Heart left ventricle (tissue), 16 donors: ENCODE measurements at regions of chr1 and their contacts with region 1.

Region 1: GRCh38 chr1:113904674-113905434 is at the starts of genes AP4B1 and DCLRE1B:
- DNase-seq: peak; percentile 99
- ATAC-seq: peak; percentile 98
- H3K4me3 ChIP-seq: peak within 1 kb of the TSS; percentile 63 to 94 (median 80)
- H3K27ac ChIP-seq: peak within 1 kb of the TSS; percentile 59 to 97 (median 92)
- H3K4me1 ChIP-seq: peaks cover 0 to 43% (median 19%) of the 10 kb centered on the region in 12 donors
- H3K27me3 ChIP-seq: no peaks in the 10 kb centered on the region
- CTCF ChIP-seq: peak; percentile 52 to 90 (median 72)
- POLR2A ChIP-seq: peak in 1 of 2 donors; percentile 73
- total RNA-seq, gene AP4B1: 7.3 to 17.2 (median 10.8) TPM
- total RNA-seq, gene DCLRE1B: 1.2 to 6.0 (median 2.2) TPM

Region 2: DNA sequence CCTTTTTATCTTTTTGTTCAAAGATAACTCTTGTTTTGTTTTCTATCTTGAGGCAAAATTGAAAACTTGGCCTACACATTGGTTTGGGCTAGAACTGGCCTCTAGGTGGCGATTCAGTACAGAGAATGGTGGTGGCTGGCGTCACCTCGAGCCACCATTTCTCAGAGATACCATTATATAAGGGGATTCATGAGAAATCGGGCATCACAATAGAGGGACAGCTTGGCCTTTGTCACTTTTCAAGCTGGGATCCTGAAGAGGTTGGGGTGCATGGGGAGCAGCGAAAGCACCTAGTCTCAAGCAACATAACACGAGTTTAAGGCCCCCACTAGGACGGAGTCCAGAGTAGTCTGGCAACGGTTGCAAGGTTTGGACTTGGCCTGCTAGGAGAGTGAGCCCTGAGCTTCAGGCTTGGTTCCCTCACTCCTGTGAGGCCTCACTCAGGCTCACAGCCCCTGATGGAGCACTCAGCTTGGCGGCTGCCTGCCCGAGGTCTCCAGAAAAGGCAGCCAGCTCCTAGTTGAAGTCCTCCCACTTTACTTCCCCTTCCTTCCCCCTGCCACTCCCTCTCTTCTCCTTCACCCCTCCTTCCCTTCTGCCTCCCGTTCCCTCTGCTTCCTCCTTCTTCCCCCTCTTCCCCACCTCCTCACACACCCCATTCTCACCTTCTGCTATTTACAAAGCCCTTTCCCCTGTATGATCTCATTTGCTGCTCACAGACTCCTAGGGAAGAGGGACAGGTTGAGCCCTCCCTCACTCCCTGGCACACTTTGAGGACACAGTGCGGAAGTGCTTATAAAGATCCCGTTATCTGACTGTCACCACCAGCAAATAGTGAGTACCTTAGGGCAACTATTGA is 764.0 kb before region 1 on chr1:
- intact Hi-C with region 1: loop called in 1 of 10 experiments (anchors 10 kb)
- DNase-seq: peak in 4 of 5 donors; percentile 41 to 65 (median 56)
- ATAC-seq: peak; percentile 76 to 92 (median 90)
- H3K4me3 ChIP-seq: peak overlapping the region in 5 of 12 donors; percentile 11 to 42 (median 20)
- H3K27ac ChIP-seq: peak overlapping the region in 5 of 12 donors; percentile 2 to 61 (median 48)
- H3K4me1 ChIP-seq: peaks cover 0 to 33% (median 25%) of the 10 kb centered on the region in 12 donors
- H3K27me3 ChIP-seq: no peaks in the 10 kb centered on the region
- CTCF ChIP-seq: peak; percentile 65 to 91 (median 82)
- POLR2A ChIP-seq: no peak

Region 3: DNA sequence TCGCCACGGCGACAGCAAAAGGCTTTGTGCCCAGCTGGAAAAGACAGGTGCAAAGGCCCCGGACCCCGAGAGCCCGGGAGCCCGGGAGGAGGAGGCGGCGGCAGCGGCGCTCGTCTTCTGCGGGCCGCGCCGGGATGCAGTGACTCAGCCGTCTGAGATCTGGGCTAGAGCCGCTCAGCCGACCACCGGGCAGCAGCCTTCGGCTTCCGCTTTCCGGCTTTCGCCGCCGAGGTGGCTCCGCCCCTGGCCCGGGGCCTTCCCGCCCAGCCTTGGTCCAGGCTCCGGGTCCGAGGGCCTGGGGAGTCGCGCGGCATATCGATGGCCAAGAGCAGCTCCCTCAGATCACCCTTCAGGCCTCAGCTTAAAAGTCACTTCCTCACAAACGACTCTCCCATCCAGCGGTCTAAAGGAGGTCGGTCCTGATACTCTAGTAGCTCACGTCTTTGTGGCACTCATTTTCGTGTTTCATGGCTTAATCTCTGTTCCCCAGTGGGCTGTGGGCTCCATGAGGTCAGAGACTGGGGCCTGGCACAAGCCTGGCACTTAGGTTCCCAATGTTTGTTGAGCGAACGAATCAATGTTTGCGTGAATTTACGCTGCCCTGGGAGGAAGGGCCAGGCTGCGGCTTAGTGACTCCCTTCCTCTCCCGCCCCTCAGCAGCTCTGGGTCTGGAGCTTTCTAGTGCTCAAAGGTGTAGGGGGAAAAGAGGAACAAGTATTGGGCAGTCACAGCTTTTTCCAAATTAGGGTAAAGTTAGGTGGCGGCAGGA is 145.3 kb before region 1 on chr1 and contains the start of gene PHTF1:
- intact Hi-C with region 1: loop called in 3 of 10 experiments (anchors 2 to 10 kb)
- DNase-seq: peak; percentile 70 to 91 (median 84)
- ATAC-seq: peak; percentile 87 to 94 (median 94)
- H3K4me3 ChIP-seq: peak within 1 kb of the TSS; percentile 50 to 94 (median 86)
- H3K27ac ChIP-seq: peak within 1 kb of the TSS; percentile 86 to 97 (median 95)
- H3K4me1 ChIP-seq: peaks cover 0 to 27% (median 10%) of the 10 kb centered on the region in 12 donors
- H3K27me3 ChIP-seq: no peaks in the 10 kb centered on the region
- CTCF ChIP-seq: no peak
- POLR2A ChIP-seq: peak in 1 of 2 donors; percentile 60
- total RNA-seq, gene PHTF1: 5.5 to 19.7 (median 11.9) TPM

Region 4: DNA sequence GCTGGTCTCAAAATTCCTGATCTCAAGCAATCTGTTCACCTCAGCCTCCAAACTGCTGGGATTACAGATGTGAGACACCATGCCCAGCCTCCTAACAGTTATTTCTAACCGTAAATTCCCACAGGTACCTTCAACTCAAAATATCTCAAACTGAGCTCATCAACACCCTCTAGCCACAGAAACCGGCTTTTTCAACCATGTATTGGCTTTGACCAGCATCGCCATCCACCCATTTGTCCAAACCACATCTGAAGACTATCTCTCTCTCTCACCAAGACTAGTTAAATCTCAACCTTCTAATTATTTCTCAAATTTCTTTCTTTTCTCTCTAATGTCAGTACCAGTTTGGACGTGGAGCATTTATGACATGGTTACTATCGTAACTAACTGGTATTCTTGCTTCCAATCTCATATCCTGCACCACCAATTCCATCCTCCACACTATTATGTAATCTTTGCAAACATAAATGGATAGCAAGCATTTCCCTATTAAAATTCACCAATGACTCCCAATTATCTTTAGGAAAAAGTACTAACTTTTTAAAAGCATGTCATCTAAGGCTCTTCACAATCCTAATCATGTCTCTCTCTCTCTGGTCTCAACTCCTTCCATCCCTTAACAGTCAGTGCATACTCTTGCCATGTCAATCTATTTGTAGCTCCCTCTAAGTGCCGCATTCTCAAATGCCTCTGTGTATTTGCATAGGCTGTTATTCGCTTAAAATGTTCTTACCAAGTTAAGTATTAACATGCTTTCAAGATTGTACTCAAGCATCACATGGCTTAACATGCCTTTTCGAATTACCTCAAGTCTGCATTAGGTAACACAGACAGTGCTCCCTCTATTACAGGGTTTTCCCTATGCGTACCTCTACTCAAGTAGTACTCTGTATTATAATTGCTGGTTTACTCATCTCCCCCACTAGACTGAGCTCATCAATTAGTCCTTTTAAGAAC is 110.7 kb before region 1 on chr1:
- intact Hi-C with region 1: no loop called
- DNase-seq: no peak
- ATAC-seq: peak; percentile 69 to 90 (median 86)
- H3K4me3 ChIP-seq: no peak overlapping the region
- H3K27ac ChIP-seq: peak overlapping the region in 7 of 12 donors; percentile 10 to 63 (median 22)
- H3K4me1 ChIP-seq: peaks cover 0 to 51% (median 22%) of the 10 kb centered on the region in 12 donors
- H3K27me3 ChIP-seq: no peaks in the 10 kb centered on the region
- CTCF ChIP-seq: no peak
- POLR2A ChIP-seq: no peak

Region 5: GRCh38 chr1:113811888-113812660 is 92.8 kb before region 1 on chr1 and contains the start of gene RSBN1:
- intact Hi-C with region 1: loop called in 3 of 10 experiments (anchors 2 to 5 kb)
- DNase-seq: peak; percentile 99
- ATAC-seq: peak; percentile 97 to 99 (median 98)
- H3K4me3 ChIP-seq: peak within 1 kb of the TSS; percentile 73 to 99 (median 88)
- H3K27ac ChIP-seq: peak within 1 kb of the TSS; percentile 81 to 98 (median 93)
- H3K4me1 ChIP-seq: peaks cover 3 to 37% (median 24%) of the 10 kb centered on the region in 12 donors
- H3K27me3 ChIP-seq: no peaks in the 10 kb centered on the region
- CTCF ChIP-seq: peak in 4 of 12 donors; percentile 7 to 29 (median 26)
- POLR2A ChIP-seq: peak; percentile 91 to 95
- total RNA-seq, gene RSBN1: 7.8 to 17.8 (median 10.6) TPM

Region 6: GRCh38 chr1:113835642-113836307 is 69.1 kb before region 1 on chr1:
- intact Hi-C with region 1: loop called in 5 of 10 experiments (anchors 2 to 10 kb)
- DNase-seq: no peak
- ATAC-seq: no peak
- H3K4me3 ChIP-seq: no peak overlapping the region
- H3K27ac ChIP-seq: no peak overlapping the region
- H3K4me1 ChIP-seq: peaks cover 0 to 5% (median 0%) of the 10 kb centered on the region in 12 donors
- H3K27me3 ChIP-seq: no peaks in the 10 kb centered on the region
- CTCF ChIP-seq: peak; percentile 49 to 78 (median 68)
- POLR2A ChIP-seq: no peak

Region 7: DNA sequence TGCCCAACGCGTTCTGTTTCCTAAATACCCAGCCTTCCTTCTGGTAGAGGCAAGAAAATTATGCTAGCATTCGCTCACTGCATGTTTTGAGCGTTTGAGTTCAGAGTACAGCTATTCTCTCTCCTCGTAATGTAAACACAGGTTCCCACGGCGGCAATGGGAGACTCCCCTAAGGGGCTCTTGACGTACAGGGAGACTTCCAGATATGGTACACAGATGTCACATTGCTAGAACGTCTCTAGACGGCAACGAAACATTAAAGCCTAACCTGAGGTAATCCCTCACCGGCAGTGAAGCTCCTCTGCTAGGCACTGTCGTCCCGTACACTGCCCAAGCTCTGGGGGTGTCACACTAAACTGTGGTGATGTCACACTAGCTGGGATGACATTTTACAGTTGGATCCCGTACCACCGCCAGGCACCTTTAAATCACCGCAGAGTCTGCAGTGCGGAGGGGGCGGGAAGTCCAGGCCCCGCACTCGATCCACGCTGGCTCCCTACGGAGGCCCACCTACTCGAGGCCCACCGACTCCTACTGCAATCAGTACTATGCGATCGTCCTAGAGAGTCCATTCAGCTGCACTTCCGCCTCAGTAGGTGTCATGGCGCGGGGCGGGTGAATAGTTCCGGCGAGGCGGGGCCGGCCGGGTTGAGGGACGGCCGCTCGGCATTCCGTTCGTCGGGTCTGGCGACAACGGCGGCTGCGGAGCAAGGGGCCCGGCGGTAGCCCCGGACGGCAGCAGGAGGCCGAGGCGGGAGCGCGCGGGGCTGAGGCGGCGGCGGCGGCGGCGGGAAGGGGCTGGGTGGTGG is 24.3 kb after region 1 on chr1 and contains the start of gene HIPK1:
- intact Hi-C with region 1: loop called in 9 of 10 experiments (anchors 1 to 2 kb)
- DNase-seq: peak; percentile 94 to 96 (median 96)
- ATAC-seq: peak; percentile 95 to 96 (median 96)
- H3K4me3 ChIP-seq: peak within 1 kb of the TSS; percentile 73 to 99 (median 94)
- H3K27ac ChIP-seq: peak within 1 kb of the TSS; percentile 62 to 98 (median 95)
- H3K4me1 ChIP-seq: peaks cover 6 to 52% (median 37%) of the 10 kb centered on the region in 12 donors
- H3K27me3 ChIP-seq: no peaks in the 10 kb centered on the region
- CTCF ChIP-seq: no peak
- POLR2A ChIP-seq: peak in 1 of 2 donors; percentile 68
- total RNA-seq, gene HIPK1: 41.8 to 102 (median 62.7) TPM

Region 8: GRCh38 chr1:113949007-113949406 is 44.2 kb after region 1 on chr1:
- intact Hi-C with region 1: no loop called
- DNase-seq: no peak
- ATAC-seq: no peak
- H3K4me3 ChIP-seq: no peak overlapping the region
- H3K27ac ChIP-seq: no peak overlapping the region
- H3K4me1 ChIP-seq: peaks cover 0 to 46% (median 24%) of the 10 kb centered on the region in 12 donors
- H3K27me3 ChIP-seq: no peaks in the 10 kb centered on the region
- CTCF ChIP-seq: peak in 7 of 12 donors; percentile 7 to 45 (median 24)
- POLR2A ChIP-seq: no peak

Region 9: DNA sequence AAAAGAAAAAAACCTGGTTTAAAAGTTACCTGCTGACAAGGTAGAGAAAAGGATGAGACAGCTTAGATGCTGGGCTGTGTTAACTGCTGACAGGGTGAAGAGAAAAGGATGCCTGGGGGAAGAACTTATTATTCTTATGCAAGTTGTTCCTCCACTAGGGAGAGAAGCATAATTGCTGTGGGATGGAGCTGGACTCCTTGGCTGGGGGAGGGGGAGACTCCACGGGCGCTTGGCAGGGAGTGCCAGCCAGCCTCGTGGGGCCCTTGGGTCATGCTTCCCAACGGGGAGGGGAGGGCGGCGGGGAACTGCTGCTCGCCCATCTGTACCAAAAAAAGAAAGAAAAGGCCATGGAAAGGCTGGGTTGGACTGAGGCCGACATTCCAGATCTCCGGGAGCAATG is 997.0 kb after region 1 on chr1:
- intact Hi-C with region 1: no loop called
- DNase-seq: no peak
- ATAC-seq: no peak
- H3K4me3 ChIP-seq: peak overlapping the region in 1 of 12 donors; percentile 8
- H3K27ac ChIP-seq: no peak overlapping the region
- H3K4me1 ChIP-seq: no peaks in the 10 kb centered on the region
- H3K27me3 ChIP-seq: no peaks in the 10 kb centered on the region
- CTCF ChIP-seq: no peak
- POLR2A ChIP-seq: no peak